ENCODE measurements at regions of chr1 and their contacts with region 1.

Region 1: DNA sequence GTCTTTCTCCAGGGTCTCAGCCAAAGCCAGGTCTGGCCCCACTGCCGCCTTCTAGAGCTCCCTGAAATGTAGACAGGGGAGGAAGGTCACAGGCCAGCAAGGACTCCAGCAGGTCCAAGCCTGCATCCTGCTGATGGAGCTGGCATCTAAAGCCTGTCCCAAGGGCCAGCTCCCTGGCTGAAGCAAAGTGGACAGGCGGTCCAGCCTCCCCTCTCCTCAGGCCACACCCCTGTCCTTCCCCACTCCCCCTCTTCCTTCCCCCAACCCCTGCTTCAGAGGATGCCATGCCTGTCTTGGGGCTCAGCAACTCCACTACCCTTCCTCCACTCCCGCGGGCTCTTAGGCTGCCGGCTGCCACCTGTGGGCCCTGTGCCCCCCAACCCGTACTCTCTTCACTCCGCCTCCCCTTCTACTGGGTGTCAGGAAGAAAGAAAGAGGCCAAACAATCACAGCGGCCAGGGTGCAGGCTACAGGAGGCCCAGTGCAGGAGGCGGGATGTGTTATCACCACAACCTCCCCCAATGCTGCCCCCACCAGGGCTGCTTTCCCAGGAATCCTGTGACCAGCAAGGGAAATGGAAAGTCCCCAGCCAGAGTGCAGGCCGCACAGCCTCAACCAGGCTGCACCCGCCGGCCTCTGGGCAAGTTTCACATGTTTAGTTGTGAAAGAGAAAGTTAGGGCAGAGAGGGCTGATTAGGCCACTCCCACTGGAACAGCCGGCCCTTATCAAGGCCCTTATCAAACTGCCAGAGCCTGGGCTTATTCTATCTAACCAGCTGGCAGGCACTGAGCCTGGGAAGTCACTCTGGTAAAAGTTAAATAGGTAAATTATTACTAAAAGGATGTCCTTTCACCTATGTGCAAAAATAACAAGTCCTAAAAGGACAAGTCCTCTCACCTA is 34.1 kb downstream of the ACOT7 start:
- DNase-seq: peak; percentile 81
- ATAC-seq: peak; percentile 81
- H3K4me3 Mint-ChIP-seq: peak overlapping the region; percentile 53
- H3K27ac Mint-ChIP-seq: peak overlapping the region; percentile 91
- H3K4me1 Mint-ChIP-seq: peaks cover 36% of the 10 kb centered on the region
- H3K27me3 Mint-ChIP-seq: no peaks in the 10 kb centered on the region

Region 2: GRCh38 chr1:6256648-6257047 is 102.8 kb before region 1 on chr1:
- CTCF ChIA-PET with region 1: no interaction called
- DNase-seq: no peak
- ATAC-seq: no peak
- H3K4me3 Mint-ChIP-seq: no peak overlapping the region
- H3K27ac Mint-ChIP-seq: no peak overlapping the region
- H3K4me1 Mint-ChIP-seq: no peaks in the 10 kb centered on the region
- H3K27me3 Mint-ChIP-seq: peaks cover 15% of the 10 kb centered on the region

Region 3: DNA sequence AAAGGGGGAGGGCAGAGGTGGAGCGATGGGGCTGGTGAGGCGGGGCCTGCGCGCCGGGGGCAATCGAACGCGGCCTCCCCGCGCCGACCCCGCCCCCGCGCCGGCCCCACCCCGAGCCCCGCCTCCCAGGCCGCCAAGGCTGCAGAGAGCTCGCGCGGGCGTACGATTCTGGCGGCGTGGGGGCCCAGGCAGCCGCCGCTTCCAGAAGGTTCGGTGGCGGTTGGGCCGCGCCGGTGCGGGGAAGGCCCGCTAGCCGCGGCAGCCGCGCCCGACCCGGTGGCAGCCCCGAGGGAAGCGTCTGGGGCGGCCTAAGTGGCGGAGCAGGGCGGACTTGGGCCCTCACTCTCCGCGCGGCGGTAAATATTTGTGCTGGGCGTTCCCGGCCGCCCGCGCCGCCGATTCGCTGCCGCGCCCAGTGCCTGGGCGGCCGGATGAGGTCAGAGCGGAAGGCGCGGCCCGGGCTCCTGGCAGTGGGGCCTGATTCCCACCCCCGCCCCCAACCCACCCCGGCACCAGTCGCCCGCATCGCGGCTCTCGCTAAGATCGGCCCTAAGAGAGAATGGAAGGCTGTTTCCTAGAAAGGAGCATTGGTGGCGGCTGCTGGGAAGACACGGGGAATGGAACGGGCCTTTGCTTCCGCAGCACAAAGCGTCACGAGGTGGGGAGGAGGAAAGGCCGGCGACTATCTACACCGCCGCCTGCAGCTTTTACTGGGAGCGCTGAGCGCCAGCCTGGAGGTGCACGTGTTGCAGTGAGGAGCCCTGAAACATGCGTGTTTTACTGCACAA is 34.1 kb after region 1 on chr1 and contains the start of gene ACOT7:
- CTCF ChIA-PET with region 1: interaction called, 44 read pairs
- DNase-seq: peak; percentile 93
- ATAC-seq: peak; percentile 89
- H3K4me3 Mint-ChIP-seq: peak within 1 kb of the TSS; percentile 84
- H3K27ac Mint-ChIP-seq: peak within 1 kb of the TSS; percentile 92
- H3K4me1 Mint-ChIP-seq: peaks cover 35% of the 10 kb centered on the region
- H3K27me3 Mint-ChIP-seq: no peaks in the 10 kb centered on the region
- total RNA-seq, gene ACOT7: 81.3 to 87.0 TPM

Region 4: DNA sequence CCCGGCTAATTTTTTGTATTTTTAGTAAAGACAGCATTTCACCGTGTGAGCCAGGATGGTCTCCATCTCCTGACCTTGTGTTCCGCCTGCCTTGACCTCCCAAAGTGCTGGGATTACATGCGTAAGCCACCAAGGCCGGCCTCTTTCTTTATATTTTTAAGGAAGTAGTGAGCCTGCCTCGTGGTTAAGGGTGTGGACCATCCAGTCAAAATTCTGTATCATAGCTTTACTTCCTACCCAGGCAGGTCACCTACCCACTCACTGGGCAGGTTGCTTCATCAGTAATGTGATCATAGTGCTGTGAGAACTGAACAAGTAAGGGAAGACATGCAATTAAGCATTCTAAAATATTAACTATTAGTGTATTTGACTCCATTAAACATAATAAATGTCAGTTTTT is 42.2 kb after region 1 on chr1:
- CTCF ChIA-PET with region 1: interaction called, 12 read pairs
- DNase-seq: no peak
- ATAC-seq: no peak
- H3K4me3 Mint-ChIP-seq: no peak overlapping the region
- H3K27ac Mint-ChIP-seq: no peak overlapping the region
- H3K4me1 Mint-ChIP-seq: no peaks in the 10 kb centered on the region
- H3K27me3 Mint-ChIP-seq: peaks cover 26% of the 10 kb centered on the region

Region 5: DNA sequence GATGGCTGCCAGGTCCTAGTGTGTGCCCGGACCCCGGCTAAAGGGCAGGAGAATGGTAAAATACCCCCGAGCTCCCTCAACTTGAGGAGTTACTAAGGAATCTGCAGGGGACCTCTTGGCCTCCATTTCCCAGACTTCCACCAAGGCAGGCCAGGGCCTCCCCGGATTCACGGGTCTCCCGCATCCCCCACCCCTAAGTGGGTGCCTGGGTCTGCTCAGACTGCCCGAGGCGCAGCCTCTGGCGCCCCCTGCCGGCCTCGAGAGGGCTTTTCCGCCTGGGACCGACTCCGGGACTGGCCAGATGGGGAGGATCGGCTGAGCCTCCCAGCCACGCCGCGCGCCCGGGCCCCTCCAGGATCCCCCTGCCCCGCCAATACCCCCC is 130.3 kb after region 1 on chr1:
- CTCF ChIA-PET with region 1: no interaction called
- DNase-seq: peak; percentile 84
- ATAC-seq: peak; percentile 80
- H3K4me3 Mint-ChIP-seq: peak overlapping the region; percentile 73
- H3K27ac Mint-ChIP-seq: peak overlapping the region; percentile 78
- H3K4me1 Mint-ChIP-seq: peaks cover 9% of the 10 kb centered on the region
- H3K27me3 Mint-ChIP-seq: peaks cover 27% of the 10 kb centered on the region

Measured in activated CD8-positive, alpha-beta memory T cell treated with anti-CD3 and anti-CD28 coated beads, Interleukin-2, amount 10 ng/mL, durations not matched to agents 7 days and 5 days (primary cell).